Activated CD4-positive, alpha-beta memory T cell treated with anti-CD3 and anti-CD28 coated beads for 36 hours (primary cell): ENCODE measurements at regions of chr16 and their contacts with region 1.

Region 1: GRCh38 chr16:81798311-81799137 is 19.4 kb downstream of the PLCG2 start:
- DNase-seq: peak; percentile 76
- H3K4me3 Mint-ChIP-seq: peak overlapping the region; percentile 35
- H3K27ac Mint-ChIP-seq: peak overlapping the region; percentile 83
- H3K4me1 Mint-ChIP-seq: peaks cover 24% of the 10 kb centered on the region
- H3K27me3 Mint-ChIP-seq: no peaks in the 10 kb centered on the region

Region 2: GRCh38 chr16:81838794-81839193 is 40.3 kb after region 1 on chr16:
- CTCF ChIA-PET with region 1: no interaction called
- POLR2A ChIA-PET with region 1: no interaction called
- intact Hi-C with region 1: loop called (anchors 5 kb)
- DNase-seq: no peak
- H3K4me3 Mint-ChIP-seq: no peak overlapping the region
- H3K27ac Mint-ChIP-seq: no peak overlapping the region
- H3K4me1 Mint-ChIP-seq: no peaks in the 10 kb centered on the region
- H3K27me3 Mint-ChIP-seq: peaks cover 5% of the 10 kb centered on the region